Activated naive CD4-positive, alpha-beta T cell treated with anti-CD3 and anti-CD28 coated beads for 36 hours (primary cell): ENCODE measurements at regions of chr1 and their contacts with region 1.

Region 1: GRCh38 chr1:27609210-27609555 is 5.2 kb upstream of the AHDC1 start:
- DNase-seq: no peak
- H3K4me3 Mint-ChIP-seq: no peak overlapping the region
- H3K27ac Mint-ChIP-seq: no peak overlapping the region
- H3K4me1 Mint-ChIP-seq: peaks cover 24% of the 10 kb centered on the region
- H3K27me3 Mint-ChIP-seq: no peaks in the 10 kb centered on the region

Region 2: DNA sequence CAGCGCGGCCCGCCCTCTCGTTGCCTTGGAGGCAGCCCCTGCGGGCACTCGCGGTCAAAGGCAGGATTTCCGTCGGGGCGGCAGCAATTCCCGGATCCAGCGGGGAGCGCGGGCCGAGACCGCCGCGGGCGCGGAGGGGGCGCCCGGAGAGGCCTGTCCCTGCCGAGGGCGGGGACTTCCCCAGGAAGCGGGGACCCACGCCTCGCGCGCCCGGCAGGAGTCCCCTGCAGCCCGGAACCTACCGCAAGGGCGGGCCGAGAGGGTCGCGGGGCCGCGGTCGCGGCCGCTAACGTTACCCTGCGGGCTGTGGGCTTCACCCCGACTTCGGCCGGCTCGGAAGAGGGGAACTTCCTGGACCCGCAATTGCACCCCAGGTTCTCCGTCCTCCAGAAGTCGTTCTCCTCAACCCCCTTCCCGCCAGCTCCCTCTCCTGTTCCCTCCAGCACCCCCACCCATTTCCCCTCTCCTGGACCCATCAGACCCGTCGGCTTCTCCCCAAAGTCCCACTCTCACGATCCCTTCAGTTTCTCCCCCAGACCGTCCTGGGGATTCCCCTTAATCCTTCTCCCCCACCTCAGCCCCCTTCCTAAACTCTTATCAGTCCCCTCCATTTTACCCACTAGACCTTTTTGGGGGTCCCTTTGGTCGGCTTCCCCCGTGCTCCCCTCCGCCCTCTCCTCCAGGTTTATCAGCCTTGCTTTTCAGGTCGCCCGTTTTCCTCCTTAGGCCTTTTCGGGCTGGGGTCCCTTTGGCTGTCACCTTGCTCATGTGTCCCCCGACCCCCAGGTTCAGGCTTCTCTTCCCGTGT is 25.2 kb after region 1 on chr1:
- CTCF ChIA-PET with region 1: interaction called, 8 read pairs
- intact Hi-C with region 1: loop called (anchors 2 kb)
- DNase-seq: peak; percentile 57
- H3K4me3 Mint-ChIP-seq: peak overlapping the region; percentile 46
- H3K27ac Mint-ChIP-seq: no peak overlapping the region
- H3K4me1 Mint-ChIP-seq: peaks cover 65% of the 10 kb centered on the region
- H3K27me3 Mint-ChIP-seq: no peaks in the 10 kb centered on the region